AG04449 (cell line): ENCODE measurements at regions of chr3 and their contacts with region 1.

Region 1: DNA sequence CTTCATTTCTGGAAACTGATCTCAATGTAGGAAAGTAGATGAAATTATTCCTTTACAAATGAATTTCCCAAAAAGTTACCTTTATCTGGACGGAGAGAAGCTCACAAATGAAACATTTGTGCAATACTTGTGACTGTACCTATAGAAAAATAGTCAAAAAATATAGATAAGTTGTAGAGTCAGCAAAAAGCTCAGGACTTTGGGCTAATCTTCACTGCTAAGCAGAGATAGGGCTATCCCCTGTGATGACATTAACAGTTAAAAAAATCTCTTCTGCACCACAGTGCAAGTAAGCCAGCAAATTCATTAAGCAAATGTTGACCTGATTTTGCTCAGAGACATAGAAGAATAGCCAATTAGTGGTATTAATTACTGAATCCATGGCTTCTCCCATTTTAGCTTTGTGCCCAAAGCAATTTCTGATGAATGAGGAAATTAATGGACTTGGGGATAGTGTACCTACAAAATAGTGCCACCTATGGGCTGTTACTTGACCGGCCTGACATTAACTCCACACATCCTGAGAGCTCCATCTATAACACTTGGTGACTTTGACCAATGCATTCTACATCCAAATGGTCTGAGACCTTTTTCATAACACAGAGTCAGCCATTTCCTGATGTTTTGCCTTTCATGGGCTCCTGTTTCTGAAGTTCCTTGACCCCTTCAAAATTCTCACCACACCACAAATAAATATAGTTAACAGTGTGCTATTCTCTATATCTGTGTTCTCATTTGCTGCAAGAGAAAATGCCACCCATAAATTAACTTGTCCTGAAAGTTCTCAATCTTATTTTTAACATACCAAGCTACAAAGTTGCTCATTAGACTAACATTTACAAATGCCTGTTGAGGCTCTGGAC is 105.0 kb downstream of the SSR3 start:
- DNase-seq: no peak
- H3K4me3 ChIP-seq: no peak overlapping the region
- CTCF ChIP-seq: peak; percentile 60

Region 2: DNA sequence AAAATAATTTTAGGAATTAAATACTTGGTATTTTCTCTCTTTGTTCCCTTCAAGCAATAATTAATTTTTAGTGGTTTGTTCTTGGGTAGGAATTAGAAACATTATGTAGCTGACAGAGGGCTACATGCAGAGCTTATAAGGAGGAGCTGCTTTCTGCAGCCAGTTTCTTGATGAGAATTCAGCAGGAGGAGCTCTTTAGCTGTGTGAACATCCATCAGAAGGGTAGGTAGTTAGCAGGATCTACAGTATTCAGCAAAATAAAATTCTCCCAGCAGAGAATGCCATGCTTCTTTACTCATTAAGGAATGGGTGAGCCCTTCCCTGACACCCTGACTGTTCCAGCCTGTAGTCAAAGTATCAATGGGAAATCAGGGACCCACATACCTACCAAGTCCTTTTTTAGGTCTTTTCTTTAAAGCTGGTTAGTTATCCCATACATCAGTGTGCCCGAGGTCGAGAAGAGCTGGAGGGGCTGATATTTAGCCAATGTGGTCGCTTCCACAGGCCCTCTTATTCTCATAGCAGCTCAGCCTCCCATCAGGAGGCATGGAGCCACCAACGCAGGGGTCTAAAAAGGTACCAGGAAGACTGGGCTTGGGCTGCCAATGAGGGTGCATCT is 275.6 kb before region 1 on chr3:
- CTCF ChIA-PET with region 1: interaction called, 74 read pairs
- POLR2A ChIA-PET with region 1: no interaction called
- DNase-seq: no peak
- H3K4me3 ChIP-seq: no peak overlapping the region
- CTCF ChIP-seq: peak; percentile 59

Region 3: DNA sequence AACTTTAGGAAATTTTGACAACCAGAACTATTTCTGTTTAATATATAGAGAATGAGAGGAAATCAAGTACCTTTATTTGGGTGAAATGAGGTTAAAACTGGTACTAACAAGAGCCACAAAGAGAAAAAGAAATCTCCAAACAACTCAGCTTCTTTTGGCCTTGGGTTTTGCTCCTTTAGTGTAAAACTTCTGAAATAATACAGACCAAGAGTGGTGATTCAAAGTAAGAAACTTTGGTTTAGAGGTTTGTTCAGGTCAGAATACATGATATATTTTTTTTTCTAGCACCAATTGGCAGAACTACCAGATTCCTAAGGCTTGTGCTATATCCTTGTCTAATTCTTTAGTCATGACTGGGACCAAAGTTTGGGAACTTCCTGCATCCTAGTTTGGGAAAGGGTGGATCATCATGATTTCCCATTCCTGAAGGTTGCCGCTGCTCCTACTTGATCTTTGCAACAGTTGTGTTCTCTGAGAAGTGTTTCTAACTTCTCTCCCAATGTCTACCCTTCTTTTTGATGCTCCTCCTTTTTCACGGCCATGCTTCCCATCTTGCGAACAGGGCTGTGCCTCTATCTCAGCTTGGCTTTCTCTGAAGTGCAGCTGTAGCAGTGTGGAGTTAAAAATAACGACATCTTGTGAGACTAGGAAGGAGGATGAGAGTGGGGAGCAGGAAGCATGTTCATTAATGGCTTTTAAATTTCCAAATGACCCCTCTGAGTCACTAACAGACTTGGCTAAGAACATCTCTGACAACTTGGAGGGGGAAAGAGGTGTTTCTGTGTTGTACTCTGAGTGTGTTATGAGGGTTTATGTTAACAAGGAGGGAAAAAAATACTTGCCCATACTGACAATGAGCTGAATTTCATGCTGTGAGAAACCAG is 241.9 kb before region 1 on chr3:
- CTCF ChIA-PET with region 1: interaction called, 10 read pairs
- POLR2A ChIA-PET with region 1: no interaction called
- DNase-seq: peak; percentile 73
- H3K4me3 ChIP-seq: 0 out of 2 replicates have a peak overlapping the region, but pooled peaks have one; percentile 1
- CTCF ChIP-seq: no peak

Region 4: GRCh38 chr3:156424758-156425157 is 25.2 kb before region 1 on chr3:
- CTCF ChIA-PET with region 1: interaction called, 19 read pairs
- POLR2A ChIA-PET with region 1: no interaction called
- DNase-seq: no peak
- H3K4me3 ChIP-seq: no peak overlapping the region
- CTCF ChIP-seq: no peak

Region 5: GRCh38 chr3:156460206-156460611 is 10.3 kb after region 1 on chr3:
- CTCF ChIA-PET with region 1: interaction called, 88 read pairs
- POLR2A ChIA-PET with region 1: no interaction called
- DNase-seq: no peak
- H3K4me3 ChIP-seq: no peak overlapping the region
- CTCF ChIP-seq: no peak

Region 6: DNA sequence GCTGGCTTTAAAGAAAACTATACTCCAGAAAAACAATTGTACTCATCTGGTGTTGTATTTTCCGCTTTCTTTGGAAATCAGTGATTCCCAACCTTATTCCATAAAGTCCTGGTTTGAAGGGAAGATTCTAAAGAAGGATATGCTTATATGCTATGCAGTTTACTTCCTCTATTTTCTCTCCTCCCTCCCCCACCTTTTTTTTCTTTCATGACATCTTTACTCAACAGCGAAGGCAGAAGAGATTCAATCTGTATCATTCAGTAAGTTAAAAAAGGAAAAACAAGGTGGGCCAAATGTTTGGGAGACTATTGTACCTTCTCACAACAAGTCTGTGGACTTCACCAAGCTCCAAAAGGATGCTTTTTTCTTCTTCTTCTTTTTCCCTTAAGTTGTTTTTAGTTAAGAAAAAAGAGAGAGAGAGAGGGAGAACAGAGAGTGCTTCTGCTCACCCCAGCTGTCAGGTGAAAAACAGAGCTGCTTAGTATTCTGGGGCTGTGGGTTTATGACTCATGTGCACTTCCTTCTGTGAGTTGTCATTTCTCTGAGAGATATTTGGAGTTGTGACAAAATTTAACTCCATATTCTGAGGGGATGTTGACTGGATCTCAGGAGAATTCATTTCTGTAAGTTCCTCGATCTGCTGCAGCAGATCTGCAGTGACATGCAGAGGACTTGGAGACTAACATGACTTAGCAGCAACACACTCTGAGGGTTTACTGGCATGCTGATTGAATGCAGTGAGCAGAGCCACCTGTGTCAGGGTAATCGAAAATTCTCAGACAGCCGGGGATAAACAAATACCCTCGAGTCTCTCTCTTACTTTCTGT is 34.2 kb after region 1 on chr3:
- CTCF ChIA-PET with region 1: interaction called, 27 read pairs
- POLR2A ChIA-PET with region 1: no interaction called
- DNase-seq: no peak
- H3K4me3 ChIP-seq: no peak overlapping the region; the same call in 1 of the 2 replicates
- CTCF ChIP-seq: no peak

Region 7: DNA sequence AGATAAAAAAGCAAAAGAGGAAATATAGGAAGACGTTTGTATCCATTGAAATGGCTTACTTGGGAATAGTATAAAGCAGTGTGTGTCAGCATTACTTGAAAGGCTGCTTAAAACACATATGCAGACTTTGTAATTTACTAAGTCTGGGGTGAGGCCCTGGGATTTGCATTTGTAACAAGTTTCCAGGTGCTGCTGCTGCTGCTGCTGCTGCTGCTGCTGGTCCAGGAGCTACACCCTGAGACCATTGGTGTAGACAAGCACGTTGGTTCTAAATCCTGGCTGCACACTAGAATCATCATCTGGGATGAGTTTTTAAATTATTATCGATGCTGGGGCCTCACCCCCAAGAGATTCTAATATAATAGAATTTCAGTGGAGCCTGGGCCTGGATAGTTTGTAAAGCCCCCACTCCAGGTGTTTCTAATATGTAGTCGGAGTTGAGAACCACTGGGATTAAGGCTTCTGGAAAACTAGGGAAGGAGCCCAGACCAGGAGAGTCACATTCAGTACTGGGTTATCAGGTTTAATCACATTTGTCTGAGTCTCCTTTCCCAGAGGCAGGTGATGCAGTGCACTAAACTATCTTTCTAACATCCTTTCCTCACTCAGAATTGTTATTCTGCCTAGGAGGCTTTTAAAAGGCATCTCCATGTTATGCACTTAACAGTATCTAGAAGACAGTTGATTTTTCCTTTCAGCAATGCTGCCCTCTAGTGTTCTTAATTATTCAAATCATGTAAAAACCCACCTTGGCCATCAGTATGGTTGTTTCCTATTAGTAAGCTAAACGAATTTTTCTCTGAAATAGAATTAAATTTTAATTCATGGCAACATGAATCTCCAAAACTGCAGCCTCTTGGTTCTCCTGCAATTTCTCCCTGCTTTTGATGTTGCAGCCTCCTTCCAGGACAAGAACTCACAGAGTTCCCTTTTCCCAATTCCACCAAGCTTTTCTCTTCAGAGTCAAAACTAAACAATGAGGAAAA is 59.5 kb after region 1 on chr3:
- CTCF ChIA-PET with region 1: interaction called, 100 read pairs
- POLR2A ChIA-PET with region 1: no interaction called
- DNase-seq: no peak
- H3K4me3 ChIP-seq: no peak overlapping the region
- CTCF ChIP-seq: peak; percentile 29

Region 8: GRCh38 chr3:156554842-156555687 is 105.1 kb after region 1 on chr3 and contains the start of gene SSR3:
- CTCF ChIA-PET with region 1: no interaction called
- POLR2A ChIA-PET with region 1: no interaction called
- DNase-seq: peak; percentile 97
- H3K4me3 ChIP-seq: peak within 1 kb of the TSS; percentile 71
- CTCF ChIP-seq: no peak

Region 9: DNA sequence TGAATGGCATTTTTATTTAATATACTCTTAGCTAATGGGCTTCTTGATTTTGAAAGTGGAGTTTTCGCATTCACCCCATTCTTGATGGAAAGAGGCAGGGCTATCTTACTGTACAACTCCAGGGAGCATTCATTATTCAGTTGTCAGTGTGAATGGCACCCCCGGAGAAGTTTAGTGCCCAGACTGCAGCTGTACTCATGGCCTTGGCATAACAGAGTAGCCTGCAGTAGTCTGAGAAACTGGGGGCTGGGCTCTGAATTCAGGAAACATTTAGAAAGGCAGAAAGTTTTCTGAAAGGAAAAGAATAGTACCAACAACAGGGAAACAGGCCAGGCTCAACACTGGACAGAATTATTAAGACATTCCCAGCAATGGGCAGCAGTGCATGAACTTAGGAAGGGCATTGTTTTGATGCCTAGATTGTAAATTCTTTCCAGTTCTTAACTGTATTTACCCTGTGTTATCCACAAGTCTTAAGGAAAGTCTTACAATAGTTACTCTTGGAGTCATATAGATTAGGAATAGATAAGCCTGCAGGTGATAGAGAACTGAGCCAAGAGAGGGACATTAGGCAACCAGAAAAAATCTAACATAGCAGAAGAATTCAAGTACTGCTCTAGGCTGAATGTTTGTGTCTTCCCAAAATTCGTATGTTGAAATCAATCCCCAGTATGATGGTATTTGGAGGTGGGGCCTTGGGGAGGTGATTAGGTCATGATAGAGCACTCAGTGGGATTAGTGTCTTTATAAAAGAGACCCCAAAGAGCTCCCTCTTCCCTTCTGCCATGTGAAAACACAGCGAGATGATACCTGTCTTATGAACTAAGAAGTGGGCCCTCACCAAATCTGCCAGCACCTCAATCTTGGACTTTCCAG is 268.9 kb after region 1 on chr3:
- CTCF ChIA-PET with region 1: no interaction called
- POLR2A ChIA-PET with region 1: no interaction called
- DNase-seq: no peak
- H3K4me3 ChIP-seq: no peak overlapping the region
- CTCF ChIP-seq: no peak

Region 10: GRCh38 chr3:156751461-156752025 is 301.6 kb after region 1 on chr3:
- CTCF ChIA-PET with region 1: no interaction called
- POLR2A ChIA-PET with region 1: no interaction called
- DNase-seq: peak; percentile 75
- H3K4me3 ChIP-seq: peak overlapping the region; percentile 34
- CTCF ChIP-seq: peak; percentile 23